AG04450 (cell line): ENCODE measurements at regions of chr6 and their contacts with region 1.

Region 1: DNA sequence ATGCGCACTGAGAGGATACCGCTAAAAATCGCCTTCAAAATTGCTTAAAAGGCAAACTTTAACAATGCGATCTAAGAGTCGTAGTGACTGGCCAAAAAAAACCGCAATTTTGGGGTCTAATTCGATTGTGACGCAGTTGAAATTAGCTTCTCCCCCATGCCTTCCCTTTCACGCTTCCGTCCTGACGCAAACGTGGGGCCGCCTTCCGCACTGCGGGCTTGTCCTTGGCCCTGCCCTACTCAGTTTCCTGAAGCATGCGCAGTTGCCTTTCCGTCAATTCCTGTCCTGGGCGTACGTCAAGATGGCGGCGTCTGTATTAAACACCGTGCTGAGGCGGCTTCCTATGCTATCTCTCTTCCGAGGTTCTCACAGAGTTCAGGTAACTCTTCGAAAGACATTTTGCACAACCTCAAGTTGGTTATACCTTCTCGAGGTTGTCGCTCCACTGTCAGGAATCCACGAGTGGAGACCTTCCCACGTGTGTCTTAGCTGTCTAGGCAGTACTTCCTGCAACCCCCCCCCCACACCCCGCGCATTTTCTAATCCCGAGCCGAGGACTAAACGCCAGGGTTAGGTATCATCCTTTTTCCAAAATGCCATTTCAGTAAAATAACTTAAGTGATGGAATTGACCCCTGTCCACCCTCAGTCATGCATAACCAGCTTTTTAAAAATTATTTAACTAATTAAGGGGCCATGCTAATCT is at the start of gene MRPS18B:
- DNase-seq: peak; percentile 97
- H3K4me3 ChIP-seq: peak within 1 kb of the TSS; percentile 94
- H3K27ac ChIP-seq: peak within 1 kb of the TSS; percentile 98
- H3K27me3 ChIP-seq: no peaks in the 10 kb centered on the region
- CTCF ChIP-seq: no peak
- polyA plus RNA-seq, gene MRPS18B: 56.6 and 59.8 TPM in 2 replicates

Region 2: GRCh38 chr6:30590994-30591393 is 26.7 kb before region 1 on chr6:
- CTCF ChIA-PET with region 1: interaction called, 28 read pairs
- POLR2A ChIA-PET with region 1: interaction called, 69 read pairs
- DNase-seq: peak; percentile 48
- H3K4me3 ChIP-seq: no peak overlapping the region
- H3K27ac ChIP-seq: peak overlapping the region; percentile 66
- H3K27me3 ChIP-seq: no peaks in the 10 kb centered on the region
- CTCF ChIP-seq: no peak

Region 3: GRCh38 chr6:30600451-30600961 is 17.2 kb before region 1 on chr6:
- CTCF ChIA-PET with region 1: interaction called, 28 read pairs
- POLR2A ChIA-PET with region 1: interaction called, 69 read pairs
- DNase-seq: no peak
- H3K4me3 ChIP-seq: no peak overlapping the region
- H3K27ac ChIP-seq: peak overlapping the region; percentile 21
- H3K27me3 ChIP-seq: no peaks in the 10 kb centered on the region
- CTCF ChIP-seq: no peak

Region 4: GRCh38 chr6:30769088-30769852 is 151.6 kb after region 1 on chr6:
- CTCF ChIA-PET with region 1: no interaction called
- POLR2A ChIA-PET with region 1: interaction called, 10 read pairs
- DNase-seq: peak; percentile 86
- H3K4me3 ChIP-seq: peak overlapping the region; percentile 49
- H3K27ac ChIP-seq: peak overlapping the region; percentile 100
- H3K27me3 ChIP-seq: no peaks in the 10 kb centered on the region
- CTCF ChIP-seq: no peak

Region 5: DNA sequence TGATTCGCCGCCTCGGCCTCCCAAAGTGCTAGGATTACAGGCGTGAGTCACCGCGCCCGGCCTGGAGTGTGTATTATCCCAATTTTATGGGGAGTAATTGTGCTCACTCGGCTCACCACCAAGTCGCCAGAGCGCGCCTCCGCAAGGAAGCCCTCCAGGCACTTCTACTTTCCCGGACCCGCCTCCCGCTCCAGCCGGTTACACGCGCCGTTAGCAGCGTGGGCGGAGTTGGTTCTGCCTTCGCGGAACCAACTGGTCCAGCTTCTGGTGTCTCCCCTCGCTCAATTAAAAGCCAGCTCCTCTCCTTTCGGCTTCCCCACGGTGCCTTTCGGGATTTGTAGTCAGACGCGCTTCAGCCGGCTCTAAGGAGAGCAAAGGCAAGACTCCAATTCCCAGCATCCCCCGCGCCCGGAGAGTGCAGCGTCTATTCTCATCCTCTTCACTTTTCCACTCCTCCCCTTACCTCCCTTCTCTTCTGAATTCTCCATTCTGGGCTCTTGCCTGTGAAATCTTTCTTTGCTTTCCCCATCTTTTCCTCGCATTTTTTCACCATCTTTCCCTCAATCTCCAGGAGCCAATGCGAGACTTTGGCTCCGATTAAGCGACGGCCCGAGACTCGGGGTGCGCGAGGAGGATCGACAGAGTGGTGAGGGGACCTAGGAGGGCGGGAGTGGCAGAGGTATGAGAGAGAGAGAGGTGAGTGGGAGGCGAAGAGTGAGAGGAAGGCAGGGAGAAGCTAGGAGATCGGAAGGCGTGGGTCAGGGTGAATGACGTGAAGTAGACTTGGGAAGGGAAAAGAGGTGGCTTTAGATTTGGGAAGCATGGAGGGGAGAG is 290.3 kb after region 1 on chr6 and contains the start of gene GTF2H4:
- CTCF ChIA-PET with region 1: no interaction called
- POLR2A ChIA-PET with region 1: interaction called, 18 read pairs
- DNase-seq: peak; percentile 96
- H3K4me3 ChIP-seq: peak within 1 kb of the TSS; percentile 90
- H3K27ac ChIP-seq: peak within 1 kb of the TSS; percentile 47
- H3K27me3 ChIP-seq: no peaks in the 10 kb centered on the region
- CTCF ChIP-seq: no peak
- polyA plus RNA-seq, gene GTF2H4: 31.9 and 33.0 TPM in 2 replicates